ENCODE measurements at regions of chr17 and their contacts with region 1.

Region 1: DNA sequence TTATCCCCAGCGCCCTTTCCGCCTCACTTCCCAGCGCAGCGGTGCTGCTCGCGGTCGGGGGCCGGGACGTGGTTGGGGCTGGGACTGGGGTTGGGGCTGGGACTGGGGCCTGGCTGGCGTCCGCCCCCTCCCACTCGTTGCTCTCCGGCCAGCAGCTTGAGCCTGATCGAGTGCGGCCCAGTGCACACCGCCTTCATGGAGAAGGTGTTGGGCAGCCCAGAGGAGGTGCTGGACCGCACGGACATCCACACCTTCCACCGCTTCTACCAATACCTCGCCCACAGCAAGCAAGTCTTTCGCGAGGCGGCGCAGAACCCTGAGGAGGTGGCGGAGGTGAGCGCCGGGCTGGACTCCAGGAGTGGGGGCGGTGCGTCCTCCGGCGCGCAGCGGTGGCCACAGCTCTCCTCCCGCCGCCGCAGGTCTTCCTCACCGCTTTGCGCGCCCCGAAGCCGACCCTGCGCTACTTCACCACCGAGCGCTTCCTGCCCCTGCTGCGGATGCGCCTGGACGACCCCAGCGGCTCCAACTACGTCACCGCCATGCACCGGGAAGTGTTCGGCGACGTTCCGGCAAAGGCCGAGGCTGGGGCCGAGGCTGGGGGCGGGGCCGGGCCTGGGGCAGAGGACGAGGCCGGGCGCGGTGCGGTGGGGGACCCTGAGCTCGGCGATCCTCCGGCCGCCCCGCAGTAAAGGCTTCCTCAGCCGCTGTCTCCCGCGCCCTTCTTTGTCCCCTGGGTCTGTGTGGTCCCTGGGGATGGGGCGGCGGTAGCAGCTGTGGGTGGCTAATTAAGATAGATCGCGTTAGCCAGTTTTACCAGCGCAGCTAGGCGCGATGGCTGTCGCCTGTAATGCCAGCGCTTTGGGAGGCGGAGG is 1.8 kb downstream of the HSD17B1 start:
- DNase-seq: peak; percentile 68 to 80 (median 74)
- H3K4me3 ChIP-seq: peak overlapping the region; percentile 49 to 69
- H3K4me3 Mint-ChIP-seq: peak overlapping the region; percentile 86 to 92 (median 91)
- H3K27ac ChIP-seq: peak overlapping the region; percentile 77
- H3K27ac Mint-ChIP-seq: peak overlapping the region; percentile 79 to 94 (median 93)
- H3K4me1 ChIP-seq: peaks cover 17% of the 10 kb centered on the region
- H3K4me1 Mint-ChIP-seq: peaks cover 10 to 43% (median 19%) of the 10 kb centered on the region in 4 donors
- H3K27me3 ChIP-seq: no peaks in the 10 kb centered on the region
- H3K27me3 Mint-ChIP-seq: no peaks in the 10 kb centered on the region

Region 2: DNA sequence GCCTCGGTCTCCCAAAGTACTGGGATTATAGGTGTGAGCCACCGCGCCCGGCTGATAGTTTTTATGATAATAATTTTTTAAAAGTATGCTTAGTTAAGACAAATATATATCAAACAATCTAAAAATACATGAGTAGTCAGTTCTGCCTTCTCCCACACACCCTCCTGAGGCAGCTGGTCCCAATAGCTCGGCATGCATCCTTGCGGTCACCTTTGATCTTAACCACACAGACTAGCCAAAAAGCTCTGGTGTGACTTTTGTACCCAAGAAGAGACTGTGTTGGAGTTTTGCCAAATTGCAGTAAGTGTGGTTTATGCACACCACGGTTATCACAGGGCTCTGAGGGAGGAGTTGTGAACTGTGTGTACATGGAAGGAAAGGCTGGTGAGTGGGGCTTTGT is 70.2 kb before region 1 on chr17:
- CTCF ChIA-PET with region 1: no interaction called
- POLR2A ChIA-PET with region 1: no interaction called
- intact Hi-C with region 1: no loop called
- DNase-seq: peak; percentile 87 to 92 (median 88)
- H3K4me3 ChIP-seq: peak overlapping the region in 1 of 2 donors; percentile 5
- H3K4me3 Mint-ChIP-seq: peak overlapping the region; percentile 10 to 77 (median 71)
- H3K27ac ChIP-seq: no peak overlapping the region
- H3K27ac Mint-ChIP-seq: peak overlapping the region in 6 of 7 donors; percentile 5 to 93 (median 70)
- H3K4me1 ChIP-seq: peaks cover 30% of the 10 kb centered on the region
- H3K4me1 Mint-ChIP-seq: peaks cover 19 to 41% (median 30%) of the 10 kb centered on the region in 4 donors
- H3K27me3 ChIP-seq: no peaks in the 10 kb centered on the region
- H3K27me3 Mint-ChIP-seq: peaks cover 0 to 1% of the 10 kb centered on the region in 2 donors

Region 3: DNA sequence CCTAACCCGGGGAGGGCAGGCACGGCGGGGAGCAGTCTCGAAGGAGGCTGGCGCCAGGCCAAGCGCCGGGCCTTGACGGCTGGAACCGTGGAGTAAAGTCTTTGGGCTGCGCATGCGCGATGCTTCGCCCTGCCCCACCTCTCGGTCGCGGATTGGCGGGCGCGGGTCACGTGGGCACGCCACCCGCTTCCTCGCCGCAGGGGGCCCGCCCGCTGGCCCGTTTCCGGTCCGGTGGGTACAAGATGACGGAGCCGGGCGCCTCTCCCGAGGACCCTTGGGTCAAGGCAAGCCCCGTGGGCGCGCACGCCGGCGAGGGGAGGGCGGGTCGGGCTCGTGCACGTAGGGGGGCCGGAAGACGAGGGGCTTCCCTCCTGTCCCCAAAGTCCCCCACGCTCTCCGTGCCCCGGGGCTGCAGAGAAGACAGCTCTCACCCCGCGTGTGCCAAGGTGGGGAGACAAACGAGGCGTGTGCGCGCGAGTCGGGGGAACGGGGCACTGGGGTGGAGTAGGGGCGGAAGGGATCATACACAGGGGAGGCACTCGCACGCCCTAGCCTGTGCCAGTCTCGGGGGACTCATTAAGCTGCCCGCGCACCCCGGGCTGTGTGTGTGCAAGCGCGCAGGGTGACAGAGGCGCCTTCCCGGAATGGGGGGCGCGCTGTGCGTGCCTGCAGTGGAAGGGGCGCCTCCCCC is 12.5 kb after region 1 on chr17 and contains the start of gene MLX:
- CTCF ChIA-PET with region 1: interaction called, 3 read pairs
- POLR2A ChIA-PET with region 1: interaction called, 35 read pairs
- intact Hi-C with region 1: loop called (anchors 1 kb)
- DNase-seq: peak; percentile 90 to 91 (median 90)
- H3K4me3 ChIP-seq: peak within 1 kb of the TSS; percentile 89 to 97
- H3K4me3 Mint-ChIP-seq: peak within 1 kb of the TSS; percentile 94 to 98 (median 96)
- H3K27ac ChIP-seq: peak within 1 kb of the TSS; percentile 79
- H3K27ac Mint-ChIP-seq: peak within 1 kb of the TSS; percentile 95 to 98 (median 96)
- H3K4me1 ChIP-seq: peaks cover 56% of the 10 kb centered on the region
- H3K4me1 Mint-ChIP-seq: peaks cover 13 to 65% (median 42%) of the 10 kb centered on the region in 4 donors
- H3K27me3 ChIP-seq: no peaks in the 10 kb centered on the region
- H3K27me3 Mint-ChIP-seq: no peaks in the 10 kb centered on the region
- total RNA-seq, gene MLX: 73.3 to 73.7 TPM